CD14-positive monocyte (primary cell): ENCODE measurements at regions of chr12 and their contacts with region 1.

Region 1: DNA sequence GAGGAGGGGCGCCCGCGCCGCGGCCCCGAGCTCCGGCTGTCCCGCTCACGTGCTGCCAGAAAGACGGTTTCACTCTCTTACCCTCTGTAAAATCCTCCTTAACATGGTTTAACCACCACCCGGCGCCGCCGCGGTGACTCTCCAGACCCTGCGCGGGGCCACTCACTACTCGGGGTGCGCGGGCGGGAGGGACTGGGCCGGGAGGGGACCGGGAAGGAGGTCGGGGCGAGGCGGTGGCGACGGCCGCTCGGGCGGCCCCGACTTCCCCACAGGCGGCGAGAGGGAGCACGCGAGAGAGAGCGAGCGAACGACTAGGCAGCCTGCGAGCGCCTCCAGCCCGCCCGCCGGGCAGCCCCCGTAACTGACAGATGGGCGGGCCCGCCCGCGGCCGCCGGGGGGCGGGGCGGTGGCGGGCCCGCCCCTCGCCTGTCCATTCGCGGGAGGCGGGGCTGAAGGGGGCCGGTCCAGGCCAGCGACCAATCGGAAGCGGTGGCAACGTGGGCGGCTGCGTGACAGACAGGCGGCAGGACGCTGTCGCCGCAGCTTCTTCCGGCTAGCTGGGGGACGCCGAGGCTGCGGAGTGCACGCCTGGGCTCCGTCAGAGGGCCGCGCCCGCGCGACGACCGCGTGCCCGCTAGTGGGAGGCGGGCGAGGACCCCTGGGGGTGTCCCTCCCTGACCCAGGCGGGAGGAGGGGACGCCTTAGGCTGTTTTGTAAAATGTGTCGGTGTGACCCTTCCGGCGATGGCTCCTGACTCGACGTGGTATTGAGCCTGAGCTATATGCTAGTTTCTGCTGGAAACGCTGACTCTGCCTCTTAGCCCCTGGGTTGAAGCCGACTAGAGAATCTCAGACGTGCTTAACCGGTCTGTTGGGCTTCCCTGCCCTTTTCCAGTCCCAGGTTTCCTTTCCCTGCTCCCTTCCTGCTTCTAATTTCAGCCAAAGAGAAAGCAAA is at the start of gene EEA1:
- DNase-seq: peak; percentile 96
- H3K4me3 ChIP-seq: peak within 1 kb of the TSS; percentile 61 to 91 (median 81)
- H3K4me3 Mint-ChIP-seq: peak within 1 kb of the TSS; percentile 91 to 96
- H3K27ac ChIP-seq: peak within 1 kb of the TSS; percentile 90 to 97
- H3K27ac Mint-ChIP-seq: peak within 1 kb of the TSS; percentile 92 to 99 (median 99)
- H3K4me1 ChIP-seq: peaks cover 26 to 30% of the 10 kb centered on the region in 2 donors
- H3K4me1 Mint-ChIP-seq: peaks cover 25% of the 10 kb centered on the region
- H3K27me3 ChIP-seq: no peaks in the 10 kb centered on the region
- H3K27me3 Mint-ChIP-seq: peaks cover 0 to 3% (median 1%) of the 10 kb centered on the region in 3 donors
- CTCF ChIP-seq: no peak
- polyA plus RNA-seq, gene EEA1: 3.0 to 10.7 (median 3.6) TPM

Region 2: GRCh38 chr12:92829686-92830282 is 99.5 kb before region 1 on chr12:
- intact Hi-C with region 1: loop called in 1 of 2 experiments (anchors 10 kb)
- DNase-seq: no peak
- H3K4me3 ChIP-seq: no peak overlapping the region
- H3K4me3 Mint-ChIP-seq: no peak overlapping the region
- H3K27ac ChIP-seq: no peak overlapping the region
- H3K27ac Mint-ChIP-seq: peak overlapping the region in 2 of 7 donors; percentile 68
- H3K4me1 ChIP-seq: no peaks in the 10 kb centered on the region
- H3K4me1 Mint-ChIP-seq: no peaks in the 10 kb centered on the region
- H3K27me3 ChIP-seq: no peaks in the 10 kb centered on the region
- H3K27me3 Mint-ChIP-seq: no peaks in the 10 kb centered on the region
- CTCF ChIP-seq: no peak

Region 3: DNA sequence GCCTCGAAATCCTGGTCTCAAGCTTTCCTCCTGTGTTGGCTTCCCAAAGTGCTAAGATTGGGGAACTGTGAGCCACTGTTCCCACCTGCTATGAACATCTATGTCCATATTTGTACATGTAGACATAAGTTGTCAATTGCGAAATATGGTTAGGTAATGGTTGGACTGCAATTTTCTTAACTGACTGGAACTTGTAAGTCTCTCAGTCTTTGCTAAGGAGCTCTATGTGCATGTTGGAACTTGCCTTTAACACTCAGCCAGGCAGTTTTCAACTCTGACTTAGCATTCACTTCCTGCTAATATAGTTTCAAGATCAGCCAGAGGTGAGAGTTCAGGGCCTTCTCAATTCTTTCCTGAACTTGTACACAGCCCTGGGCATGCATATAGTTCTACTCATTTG is 44.4 kb after region 1 on chr12:
- intact Hi-C with region 1: loop called (anchors 5 kb)
- DNase-seq: peak; percentile 66 to 81 (median 71)
- H3K4me3 ChIP-seq: no peak overlapping the region
- H3K4me3 Mint-ChIP-seq: no peak overlapping the region
- H3K27ac ChIP-seq: peak overlapping the region; percentile 43 to 46
- H3K27ac Mint-ChIP-seq: peak overlapping the region; percentile 71 to 87 (median 86)
- H3K4me1 ChIP-seq: peaks cover 53 to 58% of the 10 kb centered on the region in 2 donors
- H3K4me1 Mint-ChIP-seq: peaks cover 50% of the 10 kb centered on the region
- H3K27me3 ChIP-seq: no peaks in the 10 kb centered on the region
- H3K27me3 Mint-ChIP-seq: peaks cover 0 to under 1% (median 0%) of the 10 kb centered on the region in 3 donors
- CTCF ChIP-seq: no peak

Region 4: GRCh38 chr12:93002293-93003054 is 73.2 kb after region 1 on chr12:
- intact Hi-C with region 1: no loop called
- DNase-seq: no peak
- H3K4me3 ChIP-seq: no peak overlapping the region
- H3K4me3 Mint-ChIP-seq: no peak overlapping the region
- H3K27ac ChIP-seq: no peak overlapping the region
- H3K27ac Mint-ChIP-seq: no peak overlapping the region
- H3K4me1 ChIP-seq: no peaks in the 10 kb centered on the region
- H3K4me1 Mint-ChIP-seq: no peaks in the 10 kb centered on the region
- H3K27me3 ChIP-seq: no peaks in the 10 kb centered on the region
- H3K27me3 Mint-ChIP-seq: peaks cover 1 to 3% (median 2%) of the 10 kb centered on the region in 3 donors
- CTCF ChIP-seq: no peak